Activated CD4-positive, alpha-beta T cell treated with anti-CD3 and anti-CD28 coated beads for 36 hours (primary cell): ENCODE measurements at regions of chr17 and their contacts with region 1.

Region 1: GRCh38 chr17:81711814-81712467 is at the start of gene SLC25A10:
- DNase-seq: peak; percentile 93
- ATAC-seq: peak; percentile 87
- H3K4me3 Mint-ChIP-seq: peak within 1 kb of the TSS; percentile 89
- H3K27ac Mint-ChIP-seq: peak within 1 kb of the TSS; percentile 84
- H3K4me1 Mint-ChIP-seq: peaks cover 24% of the 10 kb centered on the region
- H3K27me3 Mint-ChIP-seq: no peaks in the 10 kb centered on the region
- total RNA-seq, gene SLC25A10: 28.6 to 31.8 TPM

Region 2: DNA sequence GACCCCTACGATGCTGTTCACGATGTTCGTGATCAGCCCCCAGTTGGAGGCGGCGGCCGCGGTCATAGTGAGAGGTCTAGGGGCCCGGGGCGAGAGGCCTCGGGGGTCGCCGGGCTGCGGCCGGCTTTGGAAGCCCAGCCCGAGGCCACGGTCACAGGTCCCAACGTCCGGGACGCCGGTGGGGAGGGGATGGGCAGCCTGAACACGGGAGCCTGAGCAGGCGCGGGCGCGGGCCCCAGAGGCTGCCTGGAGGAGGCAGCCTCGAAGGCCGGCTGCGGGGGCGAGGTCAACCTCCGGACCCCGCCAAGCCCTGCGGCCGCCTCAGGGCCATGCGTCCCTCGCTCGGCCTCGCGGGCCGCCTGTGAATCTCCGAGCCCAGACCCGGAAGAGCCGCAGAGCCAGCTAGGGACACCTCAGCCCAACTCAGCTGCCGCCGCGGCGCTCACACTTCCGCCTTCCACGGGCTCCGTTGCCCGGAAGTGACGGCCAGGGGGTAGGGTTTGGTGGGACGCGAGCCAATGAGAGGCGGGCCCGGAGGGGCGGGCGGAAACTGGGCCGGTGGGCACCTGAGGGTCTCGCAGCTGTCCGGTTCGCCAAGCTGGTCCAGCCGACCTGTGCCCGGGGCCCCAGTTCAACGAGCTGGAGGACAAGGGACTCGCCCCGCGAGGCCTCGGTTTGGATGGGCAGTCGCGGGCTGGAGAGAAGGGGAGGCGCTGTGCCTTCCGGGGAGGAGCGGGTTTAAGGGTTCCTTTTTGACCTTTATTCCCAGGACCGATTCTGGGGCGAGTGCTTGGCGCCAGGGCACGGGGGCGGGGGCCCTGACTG is 416.9 kb before region 1 on chr17 and contains the start of gene SLC38A10:
- CTCF ChIA-PET with region 1: no interaction called
- POLR2A ChIA-PET with region 1: no interaction called
- intact Hi-C with region 1: loop called in 1 of 2 experiments (anchors 5 kb)
- DNase-seq: peak; percentile 95
- ATAC-seq: peak; percentile 91
- H3K4me3 Mint-ChIP-seq: peak within 1 kb of the TSS; percentile 89
- H3K27ac Mint-ChIP-seq: peak within 1 kb of the TSS; percentile 96
- H3K4me1 Mint-ChIP-seq: peaks cover 36% of the 10 kb centered on the region
- H3K27me3 Mint-ChIP-seq: no peaks in the 10 kb centered on the region
- total RNA-seq, gene SLC38A10: 47.6 to 52.9 TPM

Region 3: DNA sequence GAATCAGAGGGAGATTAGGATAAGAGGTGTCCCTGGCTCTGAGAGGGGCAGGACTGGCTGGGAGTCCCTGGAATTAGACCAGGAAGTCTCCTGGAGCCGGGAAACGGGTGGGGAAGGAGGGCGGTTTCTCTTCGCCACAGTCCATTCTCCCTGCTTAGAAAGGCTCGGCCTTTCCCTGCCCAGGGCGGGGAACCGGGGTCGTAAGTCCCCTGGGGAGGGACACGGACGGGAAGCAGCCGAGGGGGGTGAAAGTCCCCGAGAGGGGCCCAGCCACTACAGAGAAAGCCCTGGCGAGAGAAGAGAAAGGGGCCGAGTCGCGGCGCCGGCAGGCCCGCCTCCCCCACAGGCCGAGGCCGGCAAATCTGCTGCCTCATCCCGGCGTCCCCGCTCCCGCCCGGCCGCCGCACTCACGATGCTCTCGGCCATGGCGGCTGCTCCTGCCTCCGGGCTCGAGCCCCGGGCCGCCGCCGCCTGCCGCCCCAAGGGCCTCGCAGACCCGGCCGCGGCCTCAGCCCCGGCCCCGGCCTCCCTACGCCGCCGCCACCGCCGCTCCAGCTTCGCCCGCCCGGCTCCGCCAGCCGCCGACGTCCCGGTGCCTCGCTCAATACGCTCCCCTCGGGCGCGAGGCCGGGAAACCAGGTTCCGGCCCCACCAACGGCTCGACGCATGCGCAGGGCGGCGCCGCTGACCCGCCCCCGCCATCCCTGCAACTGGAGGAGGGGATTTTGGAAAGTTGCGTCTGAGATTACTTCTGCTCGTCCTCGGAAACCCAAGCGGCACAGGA is 75.2 kb before region 1 on chr17 and contains the starts of genes NPLOC4 and TSPAN10:
- CTCF ChIA-PET with region 1: no interaction called
- POLR2A ChIA-PET with region 1: no interaction called
- intact Hi-C with region 1: loop called in 1 of 2 experiments (anchors 2 kb)
- DNase-seq: peak; percentile 91
- ATAC-seq: peak; percentile 89
- H3K4me3 Mint-ChIP-seq: peak within 1 kb of the TSS; percentile 96
- H3K27ac Mint-ChIP-seq: peak within 1 kb of the TSS; percentile 84
- H3K4me1 Mint-ChIP-seq: peaks cover 23% of the 10 kb centered on the region
- H3K27me3 Mint-ChIP-seq: no peaks in the 10 kb centered on the region
- total RNA-seq, gene NPLOC4: 71.8 to 93.1 TPM
- total RNA-seq, gene TSPAN10: 0.34 to 0.35 TPM

Region 4: DNA sequence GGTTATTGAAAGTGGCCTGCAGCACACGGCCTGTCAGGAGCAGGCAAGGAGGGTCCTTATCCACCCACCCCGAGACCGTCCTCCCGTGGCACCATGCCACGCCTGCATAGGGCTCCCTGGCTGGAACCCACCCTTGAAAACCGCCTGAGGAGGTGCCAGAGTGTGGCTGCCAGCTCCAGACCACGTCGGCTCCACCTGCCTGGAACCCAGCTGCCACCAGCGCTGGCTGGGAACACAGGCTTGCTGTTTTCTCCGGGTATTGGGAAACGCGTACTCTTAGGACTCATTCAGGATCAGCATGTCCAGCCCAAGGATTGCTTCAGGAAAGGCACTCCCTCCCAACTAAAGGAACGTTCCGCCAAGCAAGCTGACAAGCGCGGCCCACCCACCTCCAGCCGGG is 35.0 kb before region 1 on chr17:
- CTCF ChIA-PET with region 1: interaction called, 4 read pairs
- POLR2A ChIA-PET with region 1: interaction called, 3 read pairs
- intact Hi-C with region 1: loop called in 1 of 2 experiments (anchors 5 kb)
- DNase-seq: no peak
- ATAC-seq: no peak
- H3K4me3 Mint-ChIP-seq: no peak overlapping the region
- H3K27ac Mint-ChIP-seq: no peak overlapping the region
- H3K4me1 Mint-ChIP-seq: no peaks in the 10 kb centered on the region
- H3K27me3 Mint-ChIP-seq: no peaks in the 10 kb centered on the region

Region 5: DNA sequence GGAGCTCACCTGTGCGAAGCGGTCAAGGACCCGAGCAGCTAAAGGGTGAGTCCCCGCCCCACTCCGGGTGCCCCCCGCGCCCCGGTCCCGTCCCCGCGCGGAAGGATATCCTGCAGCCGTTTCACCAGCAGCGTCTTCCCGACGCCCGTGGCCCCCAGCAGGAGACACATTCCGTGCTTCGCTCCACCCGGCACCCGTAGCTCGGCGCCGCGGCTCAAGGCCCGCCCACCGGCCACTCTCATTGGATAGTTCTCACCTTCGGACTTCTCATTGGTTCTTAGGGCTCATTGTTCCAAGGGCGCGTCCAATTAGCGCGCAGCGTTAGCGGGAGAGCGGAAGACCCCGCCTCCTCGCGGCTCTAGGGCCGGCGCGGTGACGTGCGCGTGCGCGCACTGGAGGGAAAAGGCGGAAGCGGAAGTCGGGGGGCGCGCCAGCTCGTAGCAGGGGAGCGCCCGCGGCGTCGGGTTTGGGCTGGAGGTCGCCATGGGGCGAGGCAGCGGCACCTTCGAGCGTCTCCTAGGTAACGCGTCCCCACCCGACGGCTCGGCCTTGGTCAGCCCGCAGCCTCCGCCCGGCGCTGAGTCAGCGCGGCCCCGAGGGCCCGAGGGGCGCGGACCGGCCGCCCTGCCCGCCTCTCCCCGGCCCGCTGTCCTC is 28.2 kb before region 1 on chr17 and contains the starts of genes ARL16 and HGS:
- CTCF ChIA-PET with region 1: interaction called, 4 read pairs
- POLR2A ChIA-PET with region 1: interaction called, 4 read pairs
- intact Hi-C with region 1: loop called (anchors 1 to 5 kb)
- DNase-seq: peak; percentile 98
- ATAC-seq: peak; percentile 98
- H3K4me3 Mint-ChIP-seq: peak within 1 kb of the TSS; percentile 87
- H3K27ac Mint-ChIP-seq: peak within 1 kb of the TSS; percentile 83
- H3K4me1 Mint-ChIP-seq: peaks cover 30% of the 10 kb centered on the region
- H3K27me3 Mint-ChIP-seq: no peaks in the 10 kb centered on the region
- total RNA-seq, gene ARL16: 39.0 to 39.1 TPM
- total RNA-seq, gene HGS: 100 to 102 TPM

Region 6: DNA sequence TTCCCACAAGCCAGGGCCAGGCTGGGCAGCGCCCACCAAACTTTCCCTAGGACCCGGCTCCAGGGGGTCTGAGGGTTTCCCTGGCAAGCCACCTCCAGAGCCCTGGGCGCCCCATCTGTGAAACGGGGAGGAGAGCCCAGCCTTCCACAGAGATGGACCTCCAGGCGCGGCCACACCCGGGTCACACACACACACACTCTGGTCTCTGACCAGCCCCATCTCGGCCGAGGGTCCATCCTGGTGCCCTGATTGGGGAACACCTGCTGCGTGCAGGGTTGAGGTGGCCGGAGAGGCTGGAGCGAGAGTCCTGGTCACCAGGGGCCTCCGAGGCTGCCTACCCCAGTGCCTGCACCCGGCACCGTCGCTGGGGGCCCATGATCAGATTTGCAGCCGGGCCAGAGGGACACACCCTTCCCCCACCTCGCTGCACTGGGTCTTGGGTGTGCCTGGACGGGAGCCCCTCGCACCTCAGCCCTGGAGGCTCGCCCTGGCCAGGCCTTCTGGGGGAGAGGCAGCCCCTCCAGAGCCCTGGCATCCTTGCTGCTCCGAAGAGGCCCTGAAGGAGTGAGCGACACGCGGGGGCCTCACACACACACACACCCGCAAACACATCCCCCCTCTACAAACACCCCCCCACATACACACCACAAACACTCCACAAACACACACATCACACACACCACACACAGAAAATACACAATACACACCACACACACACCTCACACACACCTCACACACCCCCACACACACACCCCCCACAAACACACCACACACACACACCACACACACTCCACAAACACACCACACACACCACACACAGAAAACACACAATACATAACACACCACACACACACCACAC is 29.9 kb after region 1 on chr17:
- CTCF ChIA-PET with region 1: no interaction called
- POLR2A ChIA-PET with region 1: no interaction called
- intact Hi-C with region 1: no loop called
- DNase-seq: no peak
- ATAC-seq: no peak
- H3K4me3 Mint-ChIP-seq: no peak overlapping the region
- H3K27ac Mint-ChIP-seq: no peak overlapping the region
- H3K4me1 Mint-ChIP-seq: no peaks in the 10 kb centered on the region
- H3K27me3 Mint-ChIP-seq: peaks cover 4% of the 10 kb centered on the region

Region 7: DNA sequence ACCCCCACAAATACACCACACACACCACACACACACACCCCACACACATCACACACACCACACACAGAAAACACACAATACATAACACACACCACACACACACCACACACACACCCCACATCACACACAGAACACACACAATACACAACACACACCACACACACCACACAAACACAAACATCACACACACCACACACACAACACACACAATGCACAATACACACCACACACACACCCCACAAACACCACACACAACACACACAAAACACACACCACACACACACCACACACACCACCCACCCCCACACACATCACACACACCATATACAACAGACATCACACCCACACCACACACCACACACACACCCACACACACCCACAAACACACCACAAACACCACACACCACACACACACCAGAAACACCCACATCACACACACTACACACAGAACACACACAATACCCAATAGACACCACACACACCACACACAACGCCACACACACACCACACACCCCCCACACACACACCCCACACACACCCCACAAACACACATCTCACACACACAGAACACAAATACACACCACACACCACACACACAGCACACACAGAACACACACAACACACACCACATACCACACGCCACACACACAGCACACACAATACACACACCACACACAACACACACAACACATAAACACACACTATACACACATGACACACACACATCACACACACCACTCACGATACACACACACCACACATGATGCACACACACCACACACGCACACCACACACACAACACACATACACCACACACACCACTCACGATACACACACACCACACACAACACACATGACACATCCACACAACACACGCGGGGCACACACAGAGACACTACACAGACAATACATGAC is 81.0 kb after region 1 on chr17:
- CTCF ChIA-PET with region 1: no interaction called
- POLR2A ChIA-PET with region 1: no interaction called
- intact Hi-C with region 1: no loop called
- DNase-seq: no peak
- ATAC-seq: no peak
- H3K4me3 Mint-ChIP-seq: no peak overlapping the region
- H3K27ac Mint-ChIP-seq: no peak overlapping the region
- H3K4me1 Mint-ChIP-seq: no peaks in the 10 kb centered on the region
- H3K27me3 Mint-ChIP-seq: no peaks in the 10 kb centered on the region

Region 8: GRCh38 chr17:81871387-81872230 is 159.7 kb after region 1 on chr17:
- CTCF ChIA-PET with region 1: no interaction called
- POLR2A ChIA-PET with region 1: no interaction called
- intact Hi-C with region 1: loop called in 1 of 2 experiments (anchors 2 kb)
- DNase-seq: peak; percentile 98
- ATAC-seq: no peak
- H3K4me3 Mint-ChIP-seq: peak overlapping the region; percentile 81
- H3K27ac Mint-ChIP-seq: peak overlapping the region; percentile 92
- H3K4me1 Mint-ChIP-seq: peaks cover 34% of the 10 kb centered on the region
- H3K27me3 Mint-ChIP-seq: no peaks in the 10 kb centered on the region